Activated CD4-positive, alpha-beta T cell treated with anti-CD3 and anti-CD28 coated beads for 36 hours (primary cell): ENCODE measurements at regions of chr12 and their contacts with region 1.

Region 1: DNA sequence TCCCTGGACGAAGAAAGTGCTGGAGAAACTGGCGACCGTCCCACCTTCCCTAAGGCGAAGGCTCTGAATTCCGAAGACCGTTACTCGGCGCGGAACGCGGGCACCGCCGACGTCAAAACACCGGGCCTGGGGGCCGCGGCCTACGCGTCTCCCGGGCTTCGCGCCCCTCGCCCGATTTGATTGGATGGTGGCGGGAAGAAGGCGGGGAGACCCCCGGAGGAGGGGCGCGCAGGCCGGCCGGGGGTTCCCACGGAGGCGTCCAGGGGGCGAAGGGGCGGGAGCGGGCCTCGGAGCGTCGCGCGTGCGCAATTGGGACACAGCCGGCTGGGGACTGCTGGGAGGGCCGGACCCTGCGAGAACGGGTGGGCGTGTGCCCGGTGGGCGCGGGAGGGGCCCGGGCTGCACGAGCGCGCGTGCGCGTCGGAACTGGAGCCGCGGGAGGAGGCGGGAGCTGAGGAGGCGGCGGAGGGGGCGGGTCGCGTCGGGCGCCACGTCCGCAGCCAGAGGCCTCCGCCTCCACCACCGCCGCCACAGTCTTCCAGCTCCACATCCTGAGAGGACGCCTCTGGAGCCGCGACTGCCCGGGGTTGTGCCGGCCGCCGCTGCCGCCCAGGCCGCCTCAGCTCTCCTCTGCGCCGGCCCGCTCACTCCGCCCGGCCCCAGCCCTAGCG is at the start of gene TMEM263:
- DNase-seq: peak; percentile 94
- ATAC-seq: peak; percentile 81
- H3K4me3 Mint-ChIP-seq: peak within 1 kb of the TSS; percentile 100
- H3K27ac Mint-ChIP-seq: peak within 1 kb of the TSS; percentile 98
- H3K4me1 Mint-ChIP-seq: peaks cover 23% of the 10 kb centered on the region
- H3K27me3 Mint-ChIP-seq: no peaks in the 10 kb centered on the region
- total RNA-seq, gene TMEM263: 38.9 to 43.0 TPM

Region 2: DNA sequence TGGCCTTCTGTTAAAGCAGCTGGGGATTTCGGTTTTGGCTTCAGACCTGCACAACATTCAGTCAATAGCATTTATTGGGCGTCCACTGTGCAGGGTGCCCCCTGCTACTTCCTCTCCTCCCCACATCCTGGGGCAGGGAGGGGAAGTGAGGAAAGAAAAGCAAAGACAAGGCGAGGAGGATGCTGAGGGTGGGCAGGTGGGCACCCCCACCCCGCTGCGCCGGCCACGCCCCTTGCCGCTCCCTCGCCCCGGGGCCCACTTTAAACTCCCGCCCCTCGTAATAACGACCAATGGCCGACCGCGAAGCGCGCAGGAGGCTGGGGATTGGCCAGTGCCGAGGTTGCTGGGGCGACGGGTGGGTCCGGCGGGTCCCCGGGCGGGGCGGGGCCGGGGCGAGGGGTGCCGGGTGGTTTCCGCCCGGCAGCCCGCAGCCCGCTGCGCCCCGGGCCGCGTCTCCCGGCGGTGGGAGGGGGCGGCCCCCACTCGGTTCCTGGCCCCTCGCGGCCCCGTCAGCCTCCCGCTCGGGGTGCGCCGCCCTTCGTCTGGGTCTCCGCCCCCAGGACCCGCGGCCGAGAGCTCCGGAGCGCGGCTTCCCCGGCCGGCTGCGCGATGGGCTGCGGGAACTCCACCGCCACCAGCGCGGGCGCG is 1625.1 kb before region 1 on chr12 and contains the start of gene C12orf75:
- CTCF ChIA-PET with region 1: no interaction called
- POLR2A ChIA-PET with region 1: no interaction called
- intact Hi-C with region 1: loop called in 1 of 2 experiments (anchors 2 kb)
- DNase-seq: peak; percentile 92
- ATAC-seq: peak; percentile 92
- H3K4me3 Mint-ChIP-seq: peak within 1 kb of the TSS; percentile 78
- H3K27ac Mint-ChIP-seq: peak within 1 kb of the TSS; percentile 80
- H3K4me1 Mint-ChIP-seq: peaks cover 39% of the 10 kb centered on the region
- H3K27me3 Mint-ChIP-seq: no peaks in the 10 kb centered on the region
- total RNA-seq, gene C12orf75: 53.8 to 59.9 TPM

Region 3: DNA sequence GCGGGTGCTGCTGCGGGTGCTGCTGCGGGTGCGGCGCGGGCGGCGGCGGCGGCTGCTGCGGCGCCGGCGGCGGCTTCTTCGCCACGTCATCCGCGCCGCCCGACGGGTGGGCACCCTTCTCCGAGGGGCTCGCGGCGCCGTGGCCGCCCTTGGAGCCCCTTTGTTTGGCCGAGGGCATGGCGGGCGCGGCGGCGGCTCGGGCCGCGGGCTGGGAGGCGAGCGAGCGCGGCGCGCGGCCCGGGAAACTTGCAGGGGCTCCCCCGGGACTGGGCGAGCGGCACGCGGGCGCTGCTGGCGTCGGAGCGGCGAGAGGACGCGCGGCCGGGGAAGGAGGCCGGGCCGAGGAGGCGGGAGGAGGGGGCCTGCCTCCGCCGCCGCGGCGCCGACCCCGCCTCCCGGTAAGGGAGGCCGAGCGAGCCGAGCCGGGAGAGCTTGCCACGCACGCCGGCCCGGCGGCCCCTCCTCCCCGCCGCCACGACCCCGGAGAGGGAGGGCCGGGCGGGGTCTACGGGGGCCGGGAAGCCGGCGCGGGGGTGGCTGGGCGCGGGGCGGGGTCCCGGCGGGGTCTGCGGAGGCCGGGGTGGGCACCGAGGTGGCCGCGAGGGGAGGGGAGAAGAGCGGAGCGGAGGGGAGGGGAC is 707.7 kb before region 1 on chr12 and contains the start of gene CKAP4:
- CTCF ChIA-PET with region 1: no interaction called
- POLR2A ChIA-PET with region 1: no interaction called
- intact Hi-C with region 1: loop called in 1 of 2 experiments (anchors 5 kb)
- DNase-seq: peak; percentile 72
- ATAC-seq: peak; percentile 49
- H3K4me3 Mint-ChIP-seq: peak within 1 kb of the TSS; percentile 68
- H3K27ac Mint-ChIP-seq: peak within 1 kb of the TSS; percentile 80
- H3K4me1 Mint-ChIP-seq: peaks cover 30% of the 10 kb centered on the region
- H3K27me3 Mint-ChIP-seq: no peaks in the 10 kb centered on the region
- total RNA-seq, gene CKAP4: 13.7 to 15.6 TPM

Region 4: GRCh38 chr12:106282457-106283097 is 672.9 kb before region 1 on chr12:
- CTCF ChIA-PET with region 1: no interaction called
- POLR2A ChIA-PET with region 1: no interaction called
- intact Hi-C with region 1: no loop called
- DNase-seq: peak; percentile 72
- ATAC-seq: peak; percentile 83
- H3K4me3 Mint-ChIP-seq: no peak overlapping the region
- H3K27ac Mint-ChIP-seq: no peak overlapping the region
- H3K4me1 Mint-ChIP-seq: peaks cover 11% of the 10 kb centered on the region
- H3K27me3 Mint-ChIP-seq: peaks cover 1% of the 10 kb centered on the region

Region 5: GRCh38 chr12:106302401-106303201 is 652.9 kb before region 1 on chr12 and contains the start of gene TCP11L2:
- CTCF ChIA-PET with region 1: no interaction called
- POLR2A ChIA-PET with region 1: no interaction called
- intact Hi-C with region 1: loop called in 1 of 2 experiments (anchors 1 kb)
- DNase-seq: peak; percentile 94
- ATAC-seq: peak; percentile 67
- H3K4me3 Mint-ChIP-seq: peak within 1 kb of the TSS; percentile 78
- H3K27ac Mint-ChIP-seq: peak within 1 kb of the TSS; percentile 99
- H3K4me1 Mint-ChIP-seq: peaks cover 59% of the 10 kb centered on the region
- H3K27me3 Mint-ChIP-seq: no peaks in the 10 kb centered on the region
- total RNA-seq, gene TCP11L2: 8.6 to 11.8 TPM

Region 6: GRCh38 chr12:106774005-106774807 is 181.3 kb before region 1 on chr12 and contains the start of gene RIC8B:
- CTCF ChIA-PET with region 1: no interaction called
- POLR2A ChIA-PET with region 1: no interaction called
- intact Hi-C with region 1: loop called in 1 of 2 experiments (anchors 1 kb)
- DNase-seq: peak; percentile 89
- ATAC-seq: peak; percentile 92
- H3K4me3 Mint-ChIP-seq: peak within 1 kb of the TSS; percentile 95
- H3K27ac Mint-ChIP-seq: peak within 1 kb of the TSS; percentile 98
- H3K4me1 Mint-ChIP-seq: peaks cover 32% of the 10 kb centered on the region
- H3K27me3 Mint-ChIP-seq: no peaks in the 10 kb centered on the region
- total RNA-seq, gene RIC8B: 10.7 to 11.3 TPM

Region 7: DNA sequence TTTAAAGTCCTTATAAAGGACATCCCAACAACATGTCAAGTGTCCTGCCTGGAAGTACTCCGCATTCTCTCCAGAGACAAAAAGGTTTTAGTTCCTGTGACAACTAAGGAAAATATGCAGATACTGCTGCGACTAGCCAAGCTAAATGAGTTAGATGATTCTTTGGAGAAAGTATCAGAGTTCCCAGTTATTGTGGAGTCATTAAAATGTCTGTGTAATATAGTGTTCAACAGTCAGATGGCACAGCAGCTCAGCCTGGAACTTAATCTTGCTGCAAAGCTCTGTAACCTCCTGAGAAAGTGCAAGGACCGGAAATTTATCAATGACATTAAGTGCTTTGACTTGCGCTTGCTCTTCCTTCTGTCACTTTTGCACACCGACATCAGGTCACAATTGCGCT is 140.8 kb before region 1 on chr12:
- CTCF ChIA-PET with region 1: no interaction called
- POLR2A ChIA-PET with region 1: no interaction called
- intact Hi-C with region 1: no loop called
- DNase-seq: no peak
- ATAC-seq: no peak
- H3K4me3 Mint-ChIP-seq: no peak overlapping the region
- H3K27ac Mint-ChIP-seq: no peak overlapping the region
- H3K4me1 Mint-ChIP-seq: no peaks in the 10 kb centered on the region
- H3K27me3 Mint-ChIP-seq: no peaks in the 10 kb centered on the region

Region 8: DNA sequence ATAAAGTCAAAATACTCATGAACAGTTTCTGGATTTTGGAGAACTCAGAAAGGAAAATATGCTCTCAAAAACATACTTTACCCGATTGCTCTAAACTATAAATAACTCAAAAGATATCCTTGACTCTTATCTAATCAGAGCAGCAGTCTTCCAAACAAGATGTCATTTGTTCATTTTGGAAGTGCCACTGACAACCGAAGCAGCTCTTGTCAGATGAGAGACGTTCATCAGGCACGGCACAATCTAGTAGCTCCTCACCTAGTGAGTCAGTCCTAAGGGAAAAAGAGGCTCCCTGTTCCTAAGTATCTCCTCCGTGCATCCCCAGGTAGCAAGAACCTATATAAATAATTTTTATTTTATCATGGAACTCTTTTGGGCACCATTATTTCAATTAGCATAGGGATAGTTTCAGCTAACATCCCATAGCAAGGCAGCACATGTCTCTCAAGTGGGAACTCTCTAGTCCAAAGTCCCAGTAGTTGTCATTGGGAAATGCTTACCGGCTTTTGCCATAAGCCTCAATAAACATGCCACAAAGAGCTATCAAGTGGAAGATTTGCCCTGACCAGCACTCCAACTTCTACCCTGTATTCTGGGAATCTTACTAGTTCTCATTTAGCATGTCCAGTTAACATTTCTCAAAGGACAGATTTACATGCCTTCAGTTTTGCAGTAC is 13.9 kb before region 1 on chr12:
- CTCF ChIA-PET with region 1: no interaction called
- POLR2A ChIA-PET with region 1: no interaction called
- intact Hi-C with region 1: no loop called
- DNase-seq: no peak
- ATAC-seq: no peak
- H3K4me3 Mint-ChIP-seq: no peak overlapping the region
- H3K27ac Mint-ChIP-seq: no peak overlapping the region
- H3K4me1 Mint-ChIP-seq: no peaks in the 10 kb centered on the region
- H3K27me3 Mint-ChIP-seq: no peaks in the 10 kb centered on the region

Region 9: GRCh38 chr12:106986625-106987430 is 31.3 kb after region 1 on chr12 and contains the start of gene MTERF2:
- CTCF ChIA-PET with region 1: interaction called, 3 read pairs
- POLR2A ChIA-PET with region 1: interaction called, 3 read pairs
- intact Hi-C with region 1: loop called (anchors 1 kb)
- DNase-seq: peak; percentile 88
- ATAC-seq: peak; percentile 93
- H3K4me3 Mint-ChIP-seq: peak within 1 kb of the TSS; percentile 85
- H3K27ac Mint-ChIP-seq: peak within 1 kb of the TSS; percentile 75
- H3K4me1 Mint-ChIP-seq: peaks cover 42% of the 10 kb centered on the region
- H3K27me3 Mint-ChIP-seq: no peaks in the 10 kb centered on the region
- total RNA-seq, gene MTERF2: 5.0 to 5.8 TPM

Region 10: GRCh38 chr12:107685360-107686248 is 730.1 kb after region 1 on chr12 and contains the start of gene PWP1:
- CTCF ChIA-PET with region 1: no interaction called
- POLR2A ChIA-PET with region 1: no interaction called
- intact Hi-C with region 1: loop called in 1 of 2 experiments (anchors 10 kb)
- DNase-seq: peak; percentile 97
- ATAC-seq: peak; percentile 92
- H3K4me3 Mint-ChIP-seq: peak within 1 kb of the TSS; percentile 94
- H3K27ac Mint-ChIP-seq: peak within 1 kb of the TSS; percentile 94
- H3K4me1 Mint-ChIP-seq: peaks cover 27% of the 10 kb centered on the region
- H3K27me3 Mint-ChIP-seq: no peaks in the 10 kb centered on the region
- total RNA-seq, gene PWP1: 59.5 to 60.0 TPM